CD8-positive, alpha-beta memory T cell (primary cell): ENCODE measurements at regions of chr11 and their contacts with region 1.

Region 1: GRCh38 chr11:65078151-65078550 is 5.7 kb downstream of the CDCA5 start:
- DNase-seq: peak; percentile 41 to 79 (median 50)
- H3K4me3 ChIP-seq: no peak overlapping the region
- H3K4me3 Mint-ChIP-seq: peak overlapping the region in 1 of 7 donors; percentile 59
- H3K27ac ChIP-seq: no peak overlapping the region
- H3K27ac Mint-ChIP-seq: peak overlapping the region in 7 of 8 donors; percentile 35 to 95 (median 68)
- H3K4me1 ChIP-seq: peaks cover 5% of the 10 kb centered on the region
- H3K4me1 Mint-ChIP-seq: peaks cover 4 to 15% (median 7%) of the 10 kb centered on the region in 3 donors
- H3K27me3 ChIP-seq: no peaks in the 10 kb centered on the region
- H3K27me3 Mint-ChIP-seq: no peaks in the 10 kb centered on the region

Region 2: DNA sequence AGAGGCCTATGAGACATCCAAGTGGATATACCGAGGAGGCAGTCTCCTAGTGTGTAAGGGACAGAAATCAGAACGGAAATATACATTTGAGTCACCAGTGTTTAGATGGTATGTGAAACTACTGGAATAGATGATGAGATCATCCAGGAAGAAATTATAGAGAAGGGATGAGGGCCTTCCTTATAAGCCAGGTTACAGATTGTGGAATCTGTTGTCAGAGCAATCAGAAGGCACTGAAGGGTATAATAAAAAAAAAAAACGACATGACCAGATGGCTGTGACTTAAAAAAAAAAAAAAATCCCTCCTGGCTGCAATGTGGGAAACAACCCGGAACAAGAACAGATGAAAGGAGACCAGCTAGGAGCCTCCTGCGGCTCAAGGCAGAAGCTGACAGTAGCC is 108.9 kb before region 1 on chr11:
- CTCF ChIA-PET with region 1: no interaction called
- POLR2A ChIA-PET with region 1: interaction called, 14 read pairs
- DNase-seq: no peak
- H3K4me3 ChIP-seq: no peak overlapping the region
- H3K4me3 Mint-ChIP-seq: no peak overlapping the region
- H3K27ac ChIP-seq: no peak overlapping the region
- H3K27ac Mint-ChIP-seq: no peak overlapping the region
- H3K4me1 ChIP-seq: peaks cover 5% of the 10 kb centered on the region
- H3K4me1 Mint-ChIP-seq: peaks cover 3 to 11% (median 9%) of the 10 kb centered on the region in 3 donors
- H3K27me3 ChIP-seq: no peaks in the 10 kb centered on the region
- H3K27me3 Mint-ChIP-seq: peaks cover 7 to 10% of the 10 kb centered on the region in 2 donors

Region 3: DNA sequence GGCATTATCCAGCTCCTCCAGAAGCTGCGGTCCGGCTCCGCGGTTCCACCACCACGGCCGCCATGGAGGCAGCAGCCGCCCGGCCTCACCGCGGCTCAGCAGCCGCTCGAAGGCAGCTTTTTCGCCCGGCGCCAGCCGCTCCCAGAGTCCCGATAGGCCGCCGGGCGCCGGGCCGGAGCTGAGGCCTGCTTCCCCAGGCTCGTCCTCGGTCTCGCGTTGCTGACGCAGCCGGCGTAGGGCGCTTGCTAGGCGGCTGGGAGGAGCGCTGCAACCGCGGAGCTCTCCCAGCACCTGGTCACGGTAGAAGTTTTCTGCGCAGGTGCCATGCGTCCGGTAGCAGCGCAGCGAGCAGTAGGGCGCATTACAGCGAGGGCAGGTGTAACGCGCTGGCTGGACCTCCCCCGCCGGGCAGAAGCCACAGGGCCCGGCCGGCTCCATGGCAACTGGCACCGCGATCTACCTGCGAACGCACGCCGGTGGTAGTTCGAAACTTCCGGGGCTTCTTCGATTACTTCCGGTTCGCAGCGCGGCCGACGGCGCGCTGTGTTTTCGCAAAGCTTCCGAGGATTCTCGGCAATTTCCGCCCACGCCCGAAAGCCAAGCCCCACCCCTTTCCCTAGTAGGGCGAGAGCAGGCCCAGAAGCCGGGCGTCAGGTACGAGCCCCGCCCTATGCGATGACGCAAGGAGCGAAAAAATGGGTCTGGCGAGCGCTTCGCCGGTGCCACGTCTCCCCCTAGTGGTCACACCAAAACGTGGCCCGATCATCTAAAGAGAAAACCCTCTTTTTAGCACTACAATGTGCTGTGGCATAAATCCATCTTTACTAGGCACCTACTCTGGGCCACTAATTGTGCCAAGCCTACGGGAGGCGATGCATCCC is 39.3 kb after region 1 on chr11 and contains the start of gene ZNHIT2:
- CTCF ChIA-PET with region 1: interaction called, 5 read pairs
- POLR2A ChIA-PET with region 1: interaction called, 12 read pairs
- DNase-seq: peak; percentile 99 to 100 (median 100)
- H3K4me3 ChIP-seq: peak within 1 kb of the TSS; percentile 85
- H3K4me3 Mint-ChIP-seq: peak within 1 kb of the TSS; percentile 88 to 94 (median 90)
- H3K27ac ChIP-seq: peak within 1 kb of the TSS; percentile 91
- H3K27ac Mint-ChIP-seq: peak within 1 kb of the TSS; percentile 92 to 99 (median 97)
- H3K4me1 ChIP-seq: peaks cover 45% of the 10 kb centered on the region
- H3K4me1 Mint-ChIP-seq: peaks cover 39 to 77% (median 47%) of the 10 kb centered on the region in 3 donors
- H3K27me3 ChIP-seq: no peaks in the 10 kb centered on the region
- H3K27me3 Mint-ChIP-seq: peaks cover 0 to 3% of the 10 kb centered on the region in 2 donors
- total RNA-seq, gene ZNHIT2: 15.2 to 20.1 TPM

Region 4: DNA sequence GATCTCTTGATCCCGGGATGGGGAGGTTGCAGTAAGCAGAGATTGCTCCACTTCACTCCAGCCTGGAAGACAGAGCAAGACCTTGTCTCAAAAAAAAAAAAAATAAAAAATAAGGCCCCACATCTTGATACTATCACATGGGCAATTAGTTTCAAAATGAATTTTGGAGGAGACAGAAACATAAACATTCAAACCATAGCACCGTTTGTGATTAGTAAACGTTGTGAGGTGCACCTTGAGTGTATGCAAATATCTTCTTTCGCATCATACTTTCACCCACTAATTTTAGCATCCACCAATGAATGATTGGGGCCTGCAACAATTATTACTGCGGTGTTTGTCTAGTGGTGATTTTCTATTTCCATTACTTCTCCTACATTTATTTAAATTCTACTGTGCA is 80.9 kb after region 1 on chr11:
- CTCF ChIA-PET with region 1: no interaction called
- POLR2A ChIA-PET with region 1: no interaction called
- DNase-seq: no peak
- H3K4me3 ChIP-seq: no peak overlapping the region
- H3K4me3 Mint-ChIP-seq: no peak overlapping the region
- H3K27ac ChIP-seq: no peak overlapping the region
- H3K27ac Mint-ChIP-seq: no peak overlapping the region
- H3K4me1 ChIP-seq: no peaks in the 10 kb centered on the region
- H3K4me1 Mint-ChIP-seq: no peaks in the 10 kb centered on the region
- H3K27me3 ChIP-seq: no peaks in the 10 kb centered on the region
- H3K27me3 Mint-ChIP-seq: peaks cover 9 to 15% of the 10 kb centered on the region in 2 donors